CD8-positive, alpha-beta T cell (primary cell): ENCODE measurements at regions of chr1 and their contacts with region 1.

Region 1: DNA sequence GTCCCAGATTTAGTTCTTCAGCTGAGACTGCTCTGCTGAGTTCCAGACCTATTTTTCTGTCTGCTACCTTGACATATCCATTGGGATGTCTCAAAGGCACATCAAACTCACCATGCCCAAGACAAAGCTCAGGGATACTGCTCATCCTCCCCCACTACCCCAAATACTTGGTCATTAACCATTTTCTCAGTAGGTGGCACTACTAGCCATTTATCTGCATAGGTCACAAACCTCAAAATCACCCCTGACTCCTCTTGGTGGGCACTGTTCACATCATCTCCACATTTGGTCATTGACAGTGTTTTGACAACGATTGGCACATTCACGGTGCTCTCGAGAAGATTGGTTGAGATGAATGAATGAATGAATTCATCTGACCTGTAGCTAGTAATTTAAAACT is 32.1 kb downstream of the CACNA1S start:
- DNase-seq: no peak
- ATAC-seq: no peak
- H3K4me3 ChIP-seq: no peak overlapping the region
- H3K4me3 Mint-ChIP-seq: no peak overlapping the region
- H3K27ac ChIP-seq: no peak overlapping the region
- H3K27ac Mint-ChIP-seq: no peak overlapping the region
- H3K4me1 ChIP-seq: no peaks in the 10 kb centered on the region
- H3K4me1 Mint-ChIP-seq: no peaks in the 10 kb centered on the region
- H3K27me3 ChIP-seq: no peaks in the 10 kb centered on the region
- H3K27me3 Mint-ChIP-seq: peaks cover 2% of the 10 kb centered on the region
- CTCF ChIP-seq: no peak

Region 2: GRCh38 chr1:201224666-201225370 is 144.7 kb after region 1 on chr1:
- CTCF ChIA-PET with region 1: interaction called, 7 read pairs
- POLR2A ChIA-PET with region 1: no interaction called
- intact Hi-C with region 1: loop called (anchors 2 to 5 kb)
- DNase-seq: peak in 1 of 9 experiments; percentile 29
- ATAC-seq: no peak
- H3K4me3 ChIP-seq: no peak overlapping the region
- H3K4me3 Mint-ChIP-seq: no peak overlapping the region
- H3K27ac ChIP-seq: no peak overlapping the region
- H3K27ac Mint-ChIP-seq: no peak overlapping the region
- H3K4me1 ChIP-seq: no peaks in the 10 kb centered on the region
- H3K4me1 Mint-ChIP-seq: no peaks in the 10 kb centered on the region
- H3K27me3 ChIP-seq: no peaks in the 10 kb centered on the region
- H3K27me3 Mint-ChIP-seq: peaks cover 7% of the 10 kb centered on the region
- CTCF ChIP-seq: no peak